ENCODE measurements at regions of chr9 and their contacts with region 1.

Region 1: DNA sequence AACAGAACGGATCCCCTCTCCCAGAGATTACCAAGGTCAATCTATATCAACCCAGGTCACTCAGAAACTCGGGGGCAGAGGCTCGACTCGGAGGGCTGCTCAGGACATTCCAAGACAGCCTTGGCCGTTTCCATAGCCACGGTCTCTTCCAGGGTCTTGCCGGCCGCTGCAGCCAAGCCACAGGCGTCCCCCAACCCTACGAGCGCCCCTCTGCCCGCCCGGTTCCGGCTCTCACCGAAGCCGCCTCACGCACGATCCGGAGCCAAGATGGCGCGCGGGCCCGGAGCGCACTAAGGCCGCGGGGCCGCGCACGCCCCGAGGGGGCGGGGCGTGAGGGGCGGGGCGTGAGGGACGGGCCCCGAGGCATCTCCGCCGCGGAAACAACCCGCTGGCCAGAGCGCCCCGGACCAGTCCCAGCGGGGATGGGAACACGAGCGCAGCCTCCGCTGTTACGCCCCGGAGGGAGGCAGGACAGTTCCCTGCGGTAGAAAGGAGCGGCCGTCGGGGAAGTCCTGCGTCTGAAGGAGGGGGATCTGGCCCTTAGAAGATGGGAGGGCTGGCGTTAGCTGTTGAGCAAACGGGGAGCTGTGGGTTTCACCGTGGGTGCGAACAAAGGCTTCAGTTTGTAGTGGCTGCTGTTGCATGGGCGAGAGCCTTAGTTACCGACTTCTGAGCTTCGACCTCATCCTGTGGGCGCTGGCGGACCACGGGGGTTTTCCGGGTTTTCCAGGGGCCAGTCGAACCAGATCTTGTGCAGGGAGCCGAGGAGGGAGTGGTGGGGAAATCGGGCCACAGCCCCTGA is at the start of gene RPP25L:
- DNase-seq: peak; percentile 83
- ATAC-seq: peak; percentile 86
- H3K4me3 Mint-ChIP-seq: peak within 1 kb of the TSS; percentile 82
- H3K27ac Mint-ChIP-seq: peak within 1 kb of the TSS; percentile 82
- H3K4me1 Mint-ChIP-seq: peaks cover 20% of the 10 kb centered on the region
- H3K27me3 Mint-ChIP-seq: peaks cover 11% of the 10 kb centered on the region
- CTCF ChIP-seq: no peak
- total RNA-seq, gene RPP25L: 24.5 to 35.9 TPM (median 31.4 TPM) in 3 replicates

Region 2: GRCh38 chr9:34577400-34578240 is 34.4 kb before region 1 on chr9:
- CTCF ChIA-PET with region 1: no interaction called
- POLR2A ChIA-PET with region 1: no interaction called
- DNase-seq: peak; percentile 59
- ATAC-seq: peak; percentile 27
- H3K4me3 Mint-ChIP-seq: peak overlapping the region; percentile 77
- H3K27ac Mint-ChIP-seq: no peak overlapping the region
- H3K4me1 Mint-ChIP-seq: peaks cover 48% of the 10 kb centered on the region
- H3K27me3 Mint-ChIP-seq: peaks cover 68% of the 10 kb centered on the region
- CTCF ChIP-seq: no peak

Region 3: GRCh38 chr9:34628656-34629491 is 16.8 kb after region 1 on chr9 and contains the start of gene ARID3C:
- CTCF ChIA-PET with region 1: interaction called, 26 read pairs
- POLR2A ChIA-PET with region 1: no interaction called
- DNase-seq: peak; percentile 53
- ATAC-seq: peak; percentile 68
- H3K4me3 Mint-ChIP-seq: peak within 1 kb of the TSS; percentile 73
- H3K27ac Mint-ChIP-seq: no peak within 1 kb of the TSS
- H3K4me1 Mint-ChIP-seq: peaks cover 21% of the 10 kb centered on the region
- H3K27me3 Mint-ChIP-seq: peaks cover 89% of the 10 kb centered on the region
- CTCF ChIP-seq: no peak
- total RNA-seq, gene ARID3C: 0.14 to 0.23 TPM (median 0.15 TPM) in 3 replicates

Region 4: DNA sequence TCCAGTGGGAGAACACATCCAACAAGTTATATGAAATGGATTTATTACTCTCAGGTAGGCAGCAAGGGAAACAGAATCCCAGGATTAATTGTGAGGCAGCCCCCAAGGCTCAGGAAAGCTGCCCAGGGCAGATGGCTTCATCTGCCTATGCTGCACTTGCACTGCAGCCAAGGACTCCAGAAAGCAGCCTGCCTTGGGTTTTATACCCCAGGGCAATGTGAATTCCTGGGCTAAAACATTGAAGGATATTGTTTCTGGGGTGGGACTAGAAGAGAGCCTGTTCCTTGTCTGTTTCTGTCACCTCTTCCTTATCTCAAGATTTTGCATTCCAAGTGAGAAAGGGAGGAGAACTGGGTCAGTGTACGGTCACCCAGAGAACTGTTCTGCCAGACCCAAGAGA is 59.3 kb after region 1 on chr9:
- CTCF ChIA-PET with region 1: no interaction called
- POLR2A ChIA-PET with region 1: no interaction called
- DNase-seq: no peak
- ATAC-seq: no peak
- H3K4me3 Mint-ChIP-seq: no peak overlapping the region
- H3K27ac Mint-ChIP-seq: no peak overlapping the region
- H3K4me1 Mint-ChIP-seq: peaks cover 5% of the 10 kb centered on the region
- H3K27me3 Mint-ChIP-seq: peaks cover 10% of the 10 kb centered on the region
- CTCF ChIP-seq: no peak

Region 5: DNA sequence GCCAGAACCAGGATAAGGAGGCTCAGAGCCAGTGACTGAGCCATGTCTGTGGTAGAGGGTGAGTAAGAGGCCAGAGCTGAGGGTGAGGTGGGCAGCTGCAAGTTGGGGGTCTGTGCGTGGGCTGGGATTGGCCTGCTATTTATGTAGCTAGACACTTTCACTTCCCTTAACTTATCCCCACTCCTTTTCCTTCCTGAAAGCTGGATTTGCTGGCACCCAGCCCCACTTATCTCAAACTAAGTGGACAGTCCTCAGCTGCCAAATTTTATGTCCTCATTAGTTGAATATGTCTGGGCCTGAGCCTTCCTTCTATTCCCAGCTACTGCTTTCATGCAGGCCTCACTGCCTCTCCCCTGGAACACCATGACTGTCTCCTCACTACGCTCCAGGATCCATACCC is 98.0 kb after region 1 on chr9 and contains the start of gene CCL21:
- CTCF ChIA-PET with region 1: no interaction called
- POLR2A ChIA-PET with region 1: no interaction called
- DNase-seq: no peak
- ATAC-seq: no peak
- H3K4me3 Mint-ChIP-seq: no peak within 1 kb of the TSS
- H3K27ac Mint-ChIP-seq: no peak within 1 kb of the TSS
- H3K4me1 Mint-ChIP-seq: no peaks in the 10 kb centered on the region
- H3K27me3 Mint-ChIP-seq: peaks cover 16% of the 10 kb centered on the region
- CTCF ChIP-seq: no peak
- total RNA-seq, gene CCL21: 0.37 TPM in 1 of 3 replicates, not detected in the others